ENCODE measurements at regions of chr7 and their contacts with region 1.

Region 1: DNA sequence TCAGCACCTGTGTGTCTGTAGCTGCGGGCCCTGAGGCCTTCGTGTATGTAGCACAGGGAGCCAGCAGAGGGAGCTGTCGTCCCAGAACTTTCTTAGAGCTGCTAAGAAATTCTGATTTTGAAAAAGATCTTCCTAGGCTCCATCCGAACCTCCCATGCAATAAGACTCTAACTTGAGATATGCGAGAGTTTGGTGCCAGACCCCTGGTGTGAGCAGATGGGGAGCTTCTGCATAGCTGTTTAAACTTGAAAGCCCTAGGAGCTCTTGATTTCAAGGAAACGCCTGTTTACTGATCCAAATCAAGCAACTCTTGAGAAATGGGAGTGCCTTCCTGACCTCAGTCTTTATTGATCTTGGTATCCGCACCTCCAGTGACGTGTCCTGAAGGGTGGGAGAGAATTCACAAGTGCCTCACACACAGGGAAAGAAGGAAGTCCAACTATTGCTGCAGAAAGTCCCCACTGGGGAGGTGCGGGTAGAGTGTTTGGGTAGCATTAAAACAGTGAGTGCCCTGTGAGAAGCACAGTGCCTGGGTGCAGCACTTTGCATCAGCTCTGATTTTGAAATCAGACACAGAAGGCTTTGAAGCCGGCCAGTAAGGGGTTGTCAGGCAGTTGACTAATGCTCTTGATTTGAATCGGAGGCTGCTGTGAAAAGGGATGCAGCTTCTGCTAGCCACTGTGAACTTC is 66.4 kb upstream of the STRIP2 start:
- DNase-seq: peak; percentile 69 to 88 (median 69)
- H3K4me3 ChIP-seq: peak overlapping the region in 2 of 3 experiments; percentile 38 to 56
- H3K4me3 Mint-ChIP-seq: peak overlapping the region; percentile 58 to 85
- H3K27ac ChIP-seq: peak overlapping the region; percentile 11 to 67
- H3K27ac Mint-ChIP-seq: peak overlapping the region; percentile 62 to 91 (median 84)
- H3K4me1 ChIP-seq: peaks cover 18 to 31% of the 10 kb centered on the region in 2 donors
- H3K4me1 Mint-ChIP-seq: peaks cover 27% of the 10 kb centered on the region
- H3K27me3 ChIP-seq: no peaks in the 10 kb centered on the region
- H3K27me3 Mint-ChIP-seq: no peaks in the 10 kb centered on the region
- CTCF ChIP-seq: peak; percentile 95

Region 2: DNA sequence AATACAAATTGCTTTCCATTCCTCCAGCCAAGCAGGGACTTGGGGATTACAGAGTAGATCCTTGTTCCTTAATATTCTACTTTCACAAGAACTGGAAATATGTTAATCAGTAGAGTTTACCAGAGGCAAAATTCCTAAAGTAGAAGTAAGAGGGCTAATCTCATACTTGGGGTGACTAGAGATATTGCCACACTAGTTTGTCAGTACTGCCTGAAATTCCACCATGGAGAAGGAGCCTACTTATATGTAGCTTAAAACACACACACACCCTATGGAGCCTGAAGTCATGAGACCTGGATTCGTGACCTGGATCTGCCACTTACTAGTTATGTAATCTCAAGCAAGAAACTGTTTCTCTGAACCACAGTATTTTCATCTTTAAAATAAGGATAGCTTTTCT is 100.2 kb after region 1 on chr7:
- intact Hi-C with region 1: loop called (anchors 1 to 2 kb)
- DNase-seq: no peak
- H3K4me3 ChIP-seq: no peak overlapping the region
- H3K4me3 Mint-ChIP-seq: no peak overlapping the region
- H3K27ac ChIP-seq: no peak overlapping the region
- H3K27ac Mint-ChIP-seq: no peak overlapping the region
- H3K4me1 ChIP-seq: peaks cover 9 to 10% of the 10 kb centered on the region in 2 donors
- H3K4me1 Mint-ChIP-seq: peaks cover 2% of the 10 kb centered on the region
- H3K27me3 ChIP-seq: peaks cover 2 to 12% of the 10 kb centered on the region in 2 donors
- H3K27me3 Mint-ChIP-seq: peaks cover 12 to 14% (median 13%) of the 10 kb centered on the region in 3 donors
- CTCF ChIP-seq: no peak

Region 3: DNA sequence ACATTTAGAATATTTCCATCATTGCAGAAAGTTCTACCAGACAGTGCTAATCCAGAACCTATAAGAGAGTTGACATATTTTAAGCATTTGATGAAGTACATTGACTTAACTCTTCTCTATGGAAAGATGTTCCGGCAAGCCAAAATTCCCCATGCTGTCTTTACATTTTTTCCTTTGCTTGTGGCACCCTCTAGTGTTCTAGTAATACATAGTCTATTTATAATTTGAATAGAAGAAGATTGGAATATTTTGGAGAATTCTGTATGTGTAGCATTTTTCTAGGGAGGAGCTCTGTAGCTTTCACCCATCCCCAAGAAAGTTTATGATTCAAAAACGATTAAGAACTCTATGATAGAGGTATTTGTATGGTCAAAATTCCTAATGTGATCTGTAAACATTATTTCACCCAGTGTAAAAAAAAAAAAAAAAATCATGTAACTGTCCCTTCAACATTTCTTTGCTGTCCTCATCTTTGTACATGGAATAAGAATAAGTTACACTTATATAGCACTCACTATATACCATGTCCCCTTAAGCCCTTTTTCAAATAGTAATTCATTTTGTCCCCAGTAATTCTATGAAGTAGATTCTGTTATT is 276.9 kb after region 1 on chr7:
- intact Hi-C with region 1: loop called in 1 of 2 experiments (anchors 2 kb)
- DNase-seq: peak; percentile 14 to 38 (median 31)
- H3K4me3 ChIP-seq: no peak overlapping the region
- H3K4me3 Mint-ChIP-seq: no peak overlapping the region
- H3K27ac ChIP-seq: no peak overlapping the region
- H3K27ac Mint-ChIP-seq: peak overlapping the region in 1 of 7 donors; percentile 23
- H3K4me1 ChIP-seq: no peaks in the 10 kb centered on the region
- H3K4me1 Mint-ChIP-seq: no peaks in the 10 kb centered on the region
- H3K27me3 ChIP-seq: no peaks in the 10 kb centered on the region
- H3K27me3 Mint-ChIP-seq: no peaks in the 10 kb centered on the region
- CTCF ChIP-seq: peak; percentile 56